PC-9 (cell line): ENCODE measurements at regions of chr10 and their contacts with region 1.

Region 1: GRCh38 chr10:34193931-34194626 is 621.0 kb downstream of the PARD3 start:
- DNase-seq: no peak
- H3K4me3 ChIP-seq: no peak overlapping the region
- H3K27ac ChIP-seq: no peak overlapping the region
- H3K4me1 ChIP-seq: peaks cover 4% of the 10 kb centered on the region; the same call in 1 of the 2 replicates
- H3K27me3 ChIP-seq: no peaks in the 10 kb centered on the region
- CTCF ChIP-seq: no peak

Region 2: GRCh38 chr10:34049887-34050286 is 144.2 kb before region 1 on chr10:
- CTCF ChIA-PET with region 1: no interaction called
- POLR2A ChIA-PET with region 1: interaction called, 14 read pairs
- intact Hi-C with region 1: no loop called
- DNase-seq: peak in 1 of 2 experiments; percentile 20
- H3K4me3 ChIP-seq: no peak overlapping the region
- H3K27ac ChIP-seq: no peak overlapping the region
- H3K4me1 ChIP-seq: no peaks in the 10 kb centered on the region
- H3K27me3 ChIP-seq: no peaks in the 10 kb centered on the region
- CTCF ChIP-seq: no peak

Region 3: GRCh38 chr10:34147641-34148304 is 46.3 kb before region 1 on chr10:
- CTCF ChIA-PET with region 1: no interaction called
- POLR2A ChIA-PET with region 1: no interaction called
- intact Hi-C with region 1: no loop called
- DNase-seq: no peak
- H3K4me3 ChIP-seq: no peak overlapping the region
- H3K27ac ChIP-seq: no peak overlapping the region
- H3K4me1 ChIP-seq: no peaks in the 10 kb centered on the region
- H3K27me3 ChIP-seq: no peaks in the 10 kb centered on the region
- CTCF ChIP-seq: no peak

Region 4: DNA sequence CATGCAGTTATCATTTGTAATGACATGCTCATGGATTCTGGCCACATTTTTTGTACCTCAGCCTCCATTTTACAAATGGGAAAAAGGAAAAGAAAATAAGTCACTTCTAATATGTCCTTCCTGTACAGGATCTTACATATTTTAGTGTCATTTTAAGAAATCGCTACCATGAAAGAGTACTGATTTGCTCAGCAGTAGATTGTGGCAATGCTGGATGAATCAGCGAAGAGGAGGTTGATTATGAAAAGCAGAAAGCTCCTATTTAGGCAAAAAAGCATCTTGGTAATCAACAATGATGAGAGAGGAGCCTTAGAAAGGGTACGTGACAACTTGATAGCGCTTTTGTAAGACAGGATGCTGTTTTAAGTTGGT is 98.1 kb after region 1 on chr10:
- CTCF ChIA-PET with region 1: no interaction called
- POLR2A ChIA-PET with region 1: interaction called, 10 read pairs
- intact Hi-C with region 1: no loop called
- DNase-seq: no peak
- H3K4me3 ChIP-seq: no peak overlapping the region
- H3K27ac ChIP-seq: no peak overlapping the region
- H3K4me1 ChIP-seq: peaks cover 11% of the 10 kb centered on the region
- H3K27me3 ChIP-seq: no peaks in the 10 kb centered on the region
- CTCF ChIP-seq: no peak